Prostate gland (tissue), 2 donors: ENCODE measurements at regions of chr1 and their contacts with region 1.

Region 1: GRCh38 chr1:42681741-42682483 is at the start of gene YBX1:
- DNase-seq: peak; percentile 99
- H3K4me3 ChIP-seq: peak within 1 kb of the TSS; percentile 84 to 89
- H3K27ac ChIP-seq: peak within 1 kb of the TSS; percentile 75 to 94
- H3K4me1 ChIP-seq: peaks cover 8% of the 10 kb centered on the region
- H3K27me3 ChIP-seq: no peaks in the 10 kb centered on the region
- CTCF ChIP-seq: peak in 1 of 4 experiments; percentile 2
- POLR2A ChIP-seq: no peak
- total RNA-seq, gene YBX1: 325 to 406 TPM

Region 2: GRCh38 chr1:42657971-42658879 is 23.7 kb before region 1 on chr1 and contains the start of gene PPIH:
- intact Hi-C with region 1: loop called (anchors 2 kb)
- DNase-seq: peak; percentile 92
- H3K4me3 ChIP-seq: peak within 1 kb of the TSS; percentile 63 to 67
- H3K27ac ChIP-seq: peak within 1 kb of the TSS; percentile 78 to 85
- H3K4me1 ChIP-seq: peaks cover 9% of the 10 kb centered on the region
- H3K27me3 ChIP-seq: no peaks in the 10 kb centered on the region
- CTCF ChIP-seq: peak in 2 of 4 experiments; percentile 40 to 61
- POLR2A ChIP-seq: peak; percentile 34
- total RNA-seq, gene PPIH: 31.9 to 39.4 TPM

Region 3: DNA sequence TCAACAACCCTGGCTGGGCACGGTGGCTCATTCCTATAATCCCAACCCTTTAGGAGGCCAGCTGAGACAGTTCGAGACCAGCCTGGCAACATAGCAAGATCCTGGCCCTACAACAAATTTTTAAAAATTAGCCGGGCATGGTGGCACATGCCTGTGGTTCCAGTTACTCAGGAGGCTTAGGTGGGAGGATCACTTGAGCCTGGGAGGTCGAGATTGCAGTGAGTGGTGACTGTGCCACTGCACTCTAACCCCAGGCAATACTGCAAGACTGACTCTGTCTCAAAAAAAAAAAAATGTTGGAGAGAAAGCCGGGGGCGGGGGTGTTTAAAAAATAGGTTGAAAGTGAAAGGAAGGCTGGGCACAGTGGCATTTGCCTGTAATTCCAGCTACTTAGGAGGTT is 41.6 kb after region 1 on chr1:
- intact Hi-C with region 1: no loop called
- DNase-seq: no peak
- H3K4me3 ChIP-seq: no peak overlapping the region
- H3K27ac ChIP-seq: no peak overlapping the region
- H3K4me1 ChIP-seq: no peaks in the 10 kb centered on the region
- H3K27me3 ChIP-seq: no peaks in the 10 kb centered on the region
- CTCF ChIP-seq: no peak
- POLR2A ChIP-seq: no peak

Region 4: DNA sequence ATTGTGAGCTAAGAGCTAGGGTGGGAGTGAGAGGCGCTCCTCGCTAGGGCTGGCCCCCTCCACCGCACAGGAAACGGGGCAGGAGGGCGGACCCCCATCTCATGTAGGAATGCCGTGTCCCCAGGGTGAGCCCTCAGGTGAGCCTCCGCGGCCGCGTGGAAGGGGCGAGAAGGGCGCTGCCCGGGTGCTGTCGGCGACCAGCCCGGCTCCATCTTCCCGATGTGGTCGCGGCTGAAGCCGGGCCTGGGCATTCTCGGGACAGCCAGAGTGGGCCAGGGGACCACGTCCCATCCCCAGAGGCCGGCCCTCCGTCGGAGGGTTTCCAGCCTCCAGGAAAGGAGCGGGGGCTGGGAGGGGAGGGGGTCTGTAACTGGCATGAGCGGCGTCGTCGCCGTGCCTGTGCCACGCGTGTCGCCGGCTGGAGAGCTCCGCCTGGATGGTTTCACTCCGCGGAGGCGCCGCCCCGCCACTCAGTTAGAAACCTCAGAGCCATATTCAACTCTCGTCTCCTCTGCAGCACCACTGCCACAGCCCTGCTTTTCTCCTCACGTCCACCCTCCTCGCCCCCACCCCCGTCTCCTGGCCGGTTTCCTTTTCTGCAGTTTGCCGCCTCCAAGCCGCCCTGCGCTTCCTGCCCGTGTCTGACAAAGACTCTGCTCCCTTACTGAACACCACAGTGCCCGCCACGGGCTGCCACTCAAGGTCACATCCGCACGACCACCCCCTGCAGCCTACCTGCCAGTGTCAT is 103.2 kb after region 1 on chr1 and contains the start of gene TMEM269:
- intact Hi-C with region 1: no loop called
- DNase-seq: no peak
- H3K4me3 ChIP-seq: peak within 1 kb of the TSS; percentile 2 to 19
- H3K27ac ChIP-seq: no peak within 1 kb of the TSS
- H3K4me1 ChIP-seq: no peaks in the 10 kb centered on the region
- H3K27me3 ChIP-seq: no peaks in the 10 kb centered on the region
- CTCF ChIP-seq: no peak
- POLR2A ChIP-seq: no peak
- total RNA-seq, gene TMEM269: 0.14 to 0.62 TPM

Region 5: DNA sequence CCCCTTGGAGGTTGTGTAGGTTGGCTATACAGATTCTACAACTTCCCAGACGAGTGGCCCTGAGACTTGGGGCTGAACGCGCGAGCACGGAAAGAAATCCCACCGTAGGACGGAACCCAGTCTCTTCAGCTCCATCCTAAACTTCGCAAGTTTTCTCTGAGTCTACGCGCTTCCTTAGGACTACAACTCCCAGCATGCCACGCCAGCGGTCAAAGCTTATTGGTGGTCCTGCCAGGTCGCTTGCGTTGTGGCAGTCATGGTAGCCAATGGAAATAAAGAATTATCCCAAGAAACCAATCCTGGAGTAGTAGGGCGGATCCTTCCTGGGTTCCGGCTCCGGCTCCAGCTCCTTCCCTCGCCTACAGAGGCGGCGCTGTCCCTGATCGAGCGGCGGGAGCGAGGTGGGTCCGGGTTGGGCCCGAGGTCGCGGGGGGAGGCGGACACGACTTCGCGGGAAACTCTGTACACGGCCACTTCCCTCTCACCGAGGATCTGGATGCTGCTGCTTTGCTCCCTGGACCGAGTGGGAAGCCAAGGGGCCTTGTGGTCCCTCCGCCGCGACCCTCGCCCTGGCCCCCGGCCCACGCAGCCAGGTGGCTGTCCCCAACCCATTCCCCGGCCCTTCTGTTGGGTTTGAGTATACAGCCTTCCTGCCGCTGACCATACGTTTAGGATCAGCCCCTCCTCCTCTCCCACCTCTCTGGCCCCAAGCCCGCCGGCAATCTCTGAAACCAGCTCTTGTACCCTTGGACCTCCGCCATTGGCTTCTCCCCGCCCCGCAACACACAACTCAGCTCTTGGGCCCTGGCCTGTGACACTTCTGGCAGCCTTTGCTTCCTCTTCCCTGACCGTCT is 164.6 kb after region 1 on chr1 and contains the start of gene ZNF691:
- intact Hi-C with region 1: loop called (anchors 10 kb)
- DNase-seq: peak; percentile 97
- H3K4me3 ChIP-seq: peak within 1 kb of the TSS; percentile 90 to 94
- H3K27ac ChIP-seq: peak within 1 kb of the TSS; percentile 79 to 81
- H3K4me1 ChIP-seq: no peaks in the 10 kb centered on the region
- H3K27me3 ChIP-seq: no peaks in the 10 kb centered on the region
- CTCF ChIP-seq: peak in 3 of 4 experiments; percentile 43 to 68 (median 59)
- POLR2A ChIP-seq: peak; percentile 42
- total RNA-seq, gene ZNF691: 16.0 to 19.5 TPM

Region 6: GRCh38 chr1:42877380-42877779 is 195.5 kb after region 1 on chr1:
- intact Hi-C with region 1: no loop called
- DNase-seq: no peak
- H3K4me3 ChIP-seq: no peak overlapping the region
- H3K27ac ChIP-seq: no peak overlapping the region
- H3K4me1 ChIP-seq: no peaks in the 10 kb centered on the region
- H3K27me3 ChIP-seq: no peaks in the 10 kb centered on the region
- CTCF ChIP-seq: no peak
- POLR2A ChIP-seq: no peak

Region 7: GRCh38 chr1:43143441-43143888 is 461.6 kb after region 1 on chr1:
- intact Hi-C with region 1: no loop called
- DNase-seq: no peak
- H3K4me3 ChIP-seq: no peak overlapping the region
- H3K27ac ChIP-seq: no peak overlapping the region
- H3K4me1 ChIP-seq: no peaks in the 10 kb centered on the region
- H3K27me3 ChIP-seq: no peaks in the 10 kb centered on the region
- CTCF ChIP-seq: peak in 1 of 4 experiments; percentile 10
- POLR2A ChIP-seq: no peak